ENCODE measurements at regions of chr4 and their contacts with region 1.

Region 1: GRCh38 chr4:102439236-102439614 is 61.9 kb upstream of the NFKB1 start:
- DNase-seq: no peak
- H3K4me3 ChIP-seq: no peak overlapping the region
- H3K27ac ChIP-seq: peak overlapping the region; percentile 42 to 57 (median 50)
- H3K4me1 ChIP-seq: peaks cover 0 to 17% (median 11%) of the 10 kb centered on the region in 4 donors
- H3K27me3 ChIP-seq: no peaks in the 10 kb centered on the region
- CTCF ChIP-seq: no peak
- EP300 ChIP-seq: no peak
- POLR2A ChIP-seq: no peak

Region 2: GRCh38 chr4:103008875-103009729 is 569.9 kb after region 1 on chr4:
- in situ Hi-C with region 1: loop called in 3 of 4 experiments (anchors 5 to 10 kb)
- intact Hi-C with region 1: no loop called
- DNase-seq: no peak
- H3K4me3 ChIP-seq: no peak overlapping the region
- H3K27ac ChIP-seq: no peak overlapping the region
- H3K4me1 ChIP-seq: peaks cover 5 to 24% (median 19%) of the 10 kb centered on the region in 4 donors
- H3K27me3 ChIP-seq: no peaks in the 10 kb centered on the region
- CTCF ChIP-seq: peak; percentile 57 to 66 (median 64)
- EP300 ChIP-seq: no peak
- POLR2A ChIP-seq: no peak

Region 3: DNA sequence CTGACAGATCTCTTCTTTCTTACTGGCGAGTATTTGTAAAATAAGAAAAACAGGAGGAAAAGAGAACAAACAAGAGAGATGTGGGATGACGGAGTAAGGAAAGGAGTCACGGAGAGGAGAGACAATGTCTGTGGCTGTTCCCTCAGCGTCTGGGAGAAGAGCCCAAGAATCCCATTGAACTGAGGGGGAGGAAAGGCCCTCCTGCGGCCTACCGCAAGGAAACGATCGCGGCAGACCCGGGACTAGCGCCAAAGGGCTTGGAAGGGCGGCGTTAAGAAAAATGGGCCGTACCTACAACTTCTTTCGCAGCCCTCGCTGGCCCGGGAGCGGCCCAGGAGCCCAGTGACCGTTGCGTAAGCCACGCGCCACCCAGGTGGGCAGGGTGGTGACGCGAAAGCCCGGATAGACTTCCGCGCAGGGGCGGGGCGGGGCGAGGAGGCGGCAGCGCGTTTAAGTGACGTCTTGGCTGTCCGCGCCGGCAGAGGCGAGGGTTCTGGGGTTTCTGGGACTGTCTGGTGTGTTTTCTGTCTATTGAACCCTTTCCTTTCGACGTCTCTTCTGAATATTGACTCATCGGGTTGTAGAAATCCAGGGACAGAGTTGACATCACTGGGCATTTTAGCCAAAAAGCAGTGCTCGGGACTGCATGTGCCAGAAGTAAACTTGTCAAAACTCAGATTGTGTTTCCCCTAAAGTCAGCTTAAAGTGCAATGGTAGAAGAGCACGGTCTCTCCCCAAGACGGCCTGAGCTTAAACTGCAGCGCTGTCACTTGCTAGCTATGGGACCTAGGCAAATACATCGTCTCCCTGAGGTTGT is 580.3 kb after region 1 on chr4 and contains the start of gene SLC9B1:
- in situ Hi-C with region 1: loop called in 2 of 4 experiments (anchors 10 kb)
- intact Hi-C with region 1: no loop called
- DNase-seq: peak; percentile 98
- H3K4me3 ChIP-seq: peak within 1 kb of the TSS; percentile 9 to 55 (median 32)
- H3K27ac ChIP-seq: peak within 1 kb of the TSS; percentile 89 to 93 (median 90)
- H3K4me1 ChIP-seq: peaks cover 3 to 13% (median 7%) of the 10 kb centered on the region in 4 donors
- H3K27me3 ChIP-seq: no peaks in the 10 kb centered on the region
- CTCF ChIP-seq: peak in 2 of 5 experiments; percentile 2 to 24
- EP300 ChIP-seq: peak; percentile 66
- POLR2A ChIP-seq: peak; percentile 88
- total RNA-seq, gene SLC9B1: 0.41 to 0.79 TPM in 2 of 4 donors, not detected in the others

Measured in transverse colon (tissue), 4 donors.